Naive thymus-derived CD4-positive, alpha-beta T cell (primary cell): ENCODE measurements at regions of chr9 and their contacts with region 1.

Region 1: GRCh38 chr9:111926421-111926875 is 29.8 kb downstream of the UGCG start:
- DNase-seq: peak in 7 of 9 donors; percentile 75 to 86 (median 82)
- ATAC-seq: peak; percentile 98
- H3K4me3 ChIP-seq: no peak overlapping the region
- H3K4me3 Mint-ChIP-seq: peak overlapping the region; percentile 61 to 79 (median 72)
- H3K27ac ChIP-seq: peak overlapping the region; percentile 23
- H3K27ac Mint-ChIP-seq: peak overlapping the region; percentile 79 to 94 (median 91)
- H3K4me1 ChIP-seq: peaks cover 29 to 35% of the 10 kb centered on the region in 2 donors
- H3K4me1 Mint-ChIP-seq: peaks cover 21 to 67% (median 50%) of the 10 kb centered on the region in 7 donors
- H3K27me3 ChIP-seq: no peaks in the 10 kb centered on the region
- H3K27me3 Mint-ChIP-seq: no peaks in the 10 kb centered on the region

Region 2: GRCh38 chr9:111828193-111828592 is 98.3 kb before region 1 on chr9:
- CTCF ChIA-PET with region 1: no interaction called
- POLR2A ChIA-PET with region 1: no interaction called
- intact Hi-C with region 1: loop called in 1 of 2 experiments (anchors 1 kb)
- DNase-seq: peak in 2 of 9 donors; percentile 3 to 6
- ATAC-seq: no peak
- H3K4me3 ChIP-seq: no peak overlapping the region
- H3K4me3 Mint-ChIP-seq: no peak overlapping the region
- H3K27ac ChIP-seq: no peak overlapping the region
- H3K27ac Mint-ChIP-seq: no peak overlapping the region
- H3K4me1 ChIP-seq: no peaks in the 10 kb centered on the region
- H3K4me1 Mint-ChIP-seq: peaks cover 0 to 2% (median 0%) of the 10 kb centered on the region in 7 donors
- H3K27me3 ChIP-seq: no peaks in the 10 kb centered on the region
- H3K27me3 Mint-ChIP-seq: peaks cover 0 to 8% (median 0%) of the 10 kb centered on the region in 5 donors

Region 3: DNA sequence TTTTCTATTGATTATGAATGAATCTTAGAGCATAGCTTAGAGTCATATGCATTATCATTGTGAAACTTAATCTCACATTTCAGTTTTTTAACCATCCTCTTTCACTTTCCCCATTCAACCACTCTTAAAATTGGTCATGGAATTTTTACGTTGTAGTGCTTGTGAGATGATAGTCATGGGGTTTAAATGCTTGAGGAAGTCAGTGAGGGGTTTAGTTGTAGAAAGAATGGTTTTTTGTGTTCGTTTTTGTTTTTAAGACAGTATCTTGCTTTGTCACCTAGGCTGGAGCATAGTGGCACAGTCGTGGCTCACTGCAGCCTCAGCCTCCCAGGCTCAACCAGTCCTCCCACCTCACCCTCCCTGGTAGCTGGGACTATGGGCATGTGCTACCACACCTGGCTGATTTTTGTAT is 10.2 kb before region 1 on chr9:
- CTCF ChIA-PET with region 1: no interaction called
- POLR2A ChIA-PET with region 1: interaction called, 8 read pairs
- intact Hi-C with region 1: loop called (anchors 1 kb)
- DNase-seq: peak in 1 of 9 donors; percentile 46
- ATAC-seq: no peak
- H3K4me3 ChIP-seq: no peak overlapping the region
- H3K4me3 Mint-ChIP-seq: peak overlapping the region in 8 of 10 donors; percentile 15 to 67 (median 56)
- H3K27ac ChIP-seq: no peak overlapping the region
- H3K27ac Mint-ChIP-seq: peak overlapping the region in 6 of 9 donors; percentile 4 to 70 (median 43)
- H3K4me1 ChIP-seq: peaks cover 25 to 36% of the 10 kb centered on the region in 2 donors
- H3K4me1 Mint-ChIP-seq: peaks cover 33 to 67% (median 63%) of the 10 kb centered on the region in 7 donors
- H3K27me3 ChIP-seq: no peaks in the 10 kb centered on the region
- H3K27me3 Mint-ChIP-seq: no peaks in the 10 kb centered on the region

Region 4: DNA sequence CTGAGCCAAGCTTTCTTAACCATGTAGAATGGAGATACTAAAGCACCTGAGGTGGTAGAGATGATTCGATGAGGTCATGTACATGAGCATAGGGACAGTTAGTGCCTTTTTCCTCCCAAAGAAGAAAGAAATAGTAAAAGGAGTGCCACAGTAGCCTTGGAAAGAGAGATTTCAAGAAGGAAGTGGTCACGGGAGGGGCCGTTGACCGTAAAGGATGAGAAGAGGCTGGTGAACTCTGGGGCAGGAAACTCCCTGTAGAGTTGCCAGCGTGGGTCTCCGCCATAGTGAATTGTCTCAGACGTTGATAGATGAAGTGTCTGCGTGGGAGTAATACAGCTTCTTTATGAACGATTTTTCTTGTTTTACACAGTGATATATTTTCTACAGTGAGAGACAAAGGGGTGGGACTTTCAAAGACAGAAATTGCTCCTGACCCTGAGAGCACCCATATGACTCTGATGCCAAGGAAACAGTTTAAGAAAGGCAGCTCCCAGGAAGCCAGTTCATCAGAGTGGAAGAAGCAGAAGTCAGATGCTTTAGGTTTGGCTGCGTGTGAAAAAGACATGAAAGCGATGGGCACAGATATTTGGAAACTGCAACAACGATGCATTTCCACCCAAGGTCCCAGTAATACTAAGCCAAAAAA is 11.5 kb after region 1 on chr9:
- CTCF ChIA-PET with region 1: no interaction called
- POLR2A ChIA-PET with region 1: interaction called, 30 read pairs
- intact Hi-C with region 1: no loop called
- DNase-seq: peak; percentile 12 to 71 (median 53)
- ATAC-seq: peak; percentile 96
- H3K4me3 ChIP-seq: peak overlapping the region; percentile 29
- H3K4me3 Mint-ChIP-seq: peak overlapping the region; percentile 52 to 82 (median 76)
- H3K27ac ChIP-seq: peak overlapping the region; percentile 19
- H3K27ac Mint-ChIP-seq: peak overlapping the region; percentile 83 to 93 (median 90)
- H3K4me1 ChIP-seq: peaks cover 15 to 19% of the 10 kb centered on the region in 2 donors
- H3K4me1 Mint-ChIP-seq: peaks cover 20 to 43% (median 33%) of the 10 kb centered on the region in 7 donors
- H3K27me3 ChIP-seq: no peaks in the 10 kb centered on the region
- H3K27me3 Mint-ChIP-seq: no peaks in the 10 kb centered on the region

Region 5: DNA sequence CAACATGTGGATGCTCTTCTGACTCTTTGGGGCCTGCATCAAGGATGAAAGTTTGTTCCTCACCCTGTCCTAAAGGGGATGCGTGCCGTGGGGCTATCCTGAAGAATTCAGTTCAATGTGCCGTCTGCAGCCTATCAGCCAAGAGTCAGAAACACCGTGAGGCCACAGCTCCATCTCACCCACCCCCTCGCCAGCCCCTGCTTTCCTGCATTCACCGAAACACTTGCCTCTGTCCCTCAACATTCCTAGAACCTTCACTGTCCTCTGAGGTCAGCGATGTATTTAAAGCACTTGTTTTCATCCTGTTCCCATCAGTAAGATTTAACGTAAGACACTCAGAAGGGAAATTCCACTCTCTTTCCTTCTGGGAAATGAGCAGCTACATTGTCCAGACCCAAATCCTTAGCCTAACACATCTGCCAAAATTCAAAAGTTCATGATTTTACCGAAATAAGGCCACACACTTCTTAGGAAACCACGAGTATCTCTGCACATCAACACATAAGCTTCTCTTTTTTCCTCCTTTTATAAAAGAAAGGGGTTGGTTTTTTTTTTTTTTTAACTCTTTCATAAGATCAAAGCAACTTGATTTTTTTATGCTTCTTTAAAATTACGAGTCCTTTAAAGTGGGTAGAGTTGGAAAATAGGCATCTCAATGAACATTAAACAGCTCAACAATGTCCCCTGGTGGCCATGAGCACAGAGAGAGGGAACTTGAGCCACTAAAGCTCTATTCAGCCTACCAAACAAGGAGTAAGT is 148.0 kb after region 1 on chr9:
- CTCF ChIA-PET with region 1: interaction called, 3 read pairs
- POLR2A ChIA-PET with region 1: no interaction called
- intact Hi-C with region 1: loop called in 1 of 2 experiments (anchors 1 kb)
- DNase-seq: peak in 8 of 9 donors; percentile 53 to 81 (median 74)
- ATAC-seq: peak; percentile 90
- H3K4me3 ChIP-seq: no peak overlapping the region
- H3K4me3 Mint-ChIP-seq: peak overlapping the region in 9 of 10 donors; percentile 64 to 79 (median 72)
- H3K27ac ChIP-seq: no peak overlapping the region
- H3K27ac Mint-ChIP-seq: peak overlapping the region in 8 of 9 donors; percentile 6 to 85 (median 47)
- H3K4me1 ChIP-seq: peaks cover 3 to 16% of the 10 kb centered on the region in 2 donors
- H3K4me1 Mint-ChIP-seq: peaks cover 14 to 38% (median 28%) of the 10 kb centered on the region in 7 donors
- H3K27me3 ChIP-seq: no peaks in the 10 kb centered on the region
- H3K27me3 Mint-ChIP-seq: no peaks in the 10 kb centered on the region

Region 6: DNA sequence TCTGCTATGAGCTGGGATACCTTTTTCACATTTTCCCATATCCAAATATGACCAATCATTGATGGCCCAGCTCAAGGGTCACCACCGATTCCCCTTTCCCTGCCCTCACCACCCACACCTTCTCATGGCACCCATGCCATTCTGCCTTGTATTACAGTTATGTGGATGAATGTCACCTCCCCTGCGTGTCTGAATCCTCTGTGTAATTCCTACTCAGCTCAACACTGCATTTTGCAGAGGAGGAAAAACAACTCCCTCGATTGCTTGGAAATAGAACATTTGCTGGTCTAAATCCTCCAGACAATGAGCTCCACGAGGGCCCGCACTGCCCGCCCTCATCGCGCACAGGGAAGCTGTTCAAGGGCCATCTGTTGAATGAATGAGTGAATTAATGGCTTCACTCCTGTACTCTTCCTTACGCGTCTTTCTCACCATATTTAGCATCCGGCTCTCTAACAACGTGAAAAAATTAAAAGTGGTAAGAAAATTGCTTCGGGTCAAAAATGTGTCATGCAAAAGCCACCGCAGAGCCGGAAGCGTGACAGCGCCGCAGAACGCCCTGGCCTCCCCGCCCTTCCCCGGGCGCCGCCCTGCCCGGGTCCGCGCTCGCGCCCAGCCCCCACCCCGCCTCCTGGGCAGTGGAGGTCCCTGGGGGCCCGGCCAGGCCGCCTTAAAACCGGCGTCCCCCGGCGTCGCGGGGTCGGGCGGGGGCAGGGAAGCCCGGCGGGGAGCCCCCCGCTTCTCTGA is 247.9 kb after region 1 on chr9:
- CTCF ChIA-PET with region 1: no interaction called
- POLR2A ChIA-PET with region 1: no interaction called
- intact Hi-C with region 1: loop called in 1 of 2 experiments (anchors 10 kb)
- DNase-seq: peak; percentile 42 to 80 (median 63)
- ATAC-seq: peak; percentile 87
- H3K4me3 ChIP-seq: peak overlapping the region; percentile 67
- H3K4me3 Mint-ChIP-seq: peak overlapping the region; percentile 83 to 94 (median 90)
- H3K27ac ChIP-seq: peak overlapping the region; percentile 9
- H3K27ac Mint-ChIP-seq: peak overlapping the region; percentile 65 to 95 (median 87)
- H3K4me1 ChIP-seq: peaks cover 33 to 54% of the 10 kb centered on the region in 2 donors
- H3K4me1 Mint-ChIP-seq: peaks cover 49 to 81% (median 73%) of the 10 kb centered on the region in 7 donors
- H3K27me3 ChIP-seq: no peaks in the 10 kb centered on the region
- H3K27me3 Mint-ChIP-seq: peaks cover 0 to 3% (median 0%) of the 10 kb centered on the region in 5 donors